SK-N-SH (cell line): ENCODE measurements at regions of chr15 and their contacts with region 1.

Region 1: DNA sequence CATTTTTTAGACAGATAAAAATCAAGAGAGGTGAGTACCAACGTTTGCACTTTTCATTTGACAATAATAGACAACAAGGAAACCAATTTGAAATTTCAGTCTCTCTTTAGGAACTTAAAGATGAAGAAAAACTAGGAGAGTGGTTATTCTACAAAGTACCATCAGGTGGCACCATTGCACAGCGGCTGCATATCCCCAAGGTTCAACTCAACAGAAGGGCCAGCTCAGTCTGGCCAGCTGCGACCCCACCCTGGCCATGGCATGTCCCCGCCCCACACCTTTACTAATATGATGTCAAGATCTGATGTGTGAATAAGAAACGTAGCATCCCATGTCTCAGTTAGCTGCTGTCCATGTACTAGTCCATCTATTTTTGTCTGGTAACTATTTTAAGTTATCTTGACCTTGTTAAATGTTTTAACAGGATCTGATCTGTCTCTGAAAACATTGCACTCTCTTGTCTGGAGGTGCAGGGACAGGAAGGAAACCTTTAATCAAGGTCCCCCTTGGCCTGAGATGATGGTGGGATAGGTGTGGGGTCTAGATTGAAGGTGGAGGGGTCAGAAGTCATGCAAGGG is 35.5 kb upstream of the CGNL1 start:
- DNase-seq: peak; percentile 72
- H3K4me3 ChIP-seq: no peak overlapping the region; a peak in 1 of 4 replicates
- H3K27ac ChIP-seq: no peak overlapping the region
- H3K4me1 ChIP-seq: peaks cover 2 to 4% of the 10 kb centered on the region in 2 experiments; a peak in 2 of 4 replicates
- H3K27me3 ChIP-seq: no peaks in the 10 kb centered on the region
- CTCF ChIP-seq: peak; percentile 92
- EP300 ChIP-seq: no peak
- RAD21 ChIP-seq: peak; percentile 98

Region 2: DNA sequence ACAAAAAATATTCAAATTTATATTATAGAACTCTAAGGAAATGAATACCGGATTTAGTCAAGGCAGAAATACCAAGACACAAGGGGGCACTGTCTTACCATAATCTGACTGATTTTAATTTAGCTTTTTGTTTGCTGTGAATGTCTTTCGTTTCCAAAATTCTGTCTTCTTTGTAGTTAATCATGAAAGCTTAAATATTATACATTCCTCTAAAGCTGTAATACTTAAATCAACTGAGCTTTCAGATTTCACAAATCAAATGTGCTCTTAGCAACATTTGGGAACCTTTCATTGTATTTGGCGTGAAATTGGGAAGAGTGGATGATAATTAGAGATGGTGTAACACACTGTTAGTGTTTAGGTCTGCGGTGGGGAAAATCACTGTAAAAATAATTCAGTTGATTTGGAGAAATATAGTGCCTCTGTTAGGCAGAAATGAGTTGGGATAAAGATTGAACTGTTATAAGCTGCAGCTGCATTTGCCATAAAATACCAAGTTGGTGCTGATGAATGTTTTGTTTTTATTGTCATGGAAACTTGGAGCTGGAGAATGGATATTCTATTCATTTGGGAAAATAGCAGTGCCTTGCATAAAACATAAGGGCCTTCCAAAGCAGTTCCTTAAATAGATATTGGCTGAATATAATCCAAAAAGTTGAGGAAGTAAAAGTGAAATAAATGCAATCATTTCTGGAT is 194.1 kb before region 1 on chr15:
- CTCF ChIA-PET with region 1: interaction called, 40 read pairs
- POLR2A ChIA-PET with region 1: no interaction called
- DNase-seq: peak; percentile 21
- H3K4me3 ChIP-seq: no peak overlapping the region
- H3K27ac ChIP-seq: peak overlapping the region in 1 of 2 experiments; percentile 41; a peak in 1 of 4 replicates
- H3K4me1 ChIP-seq: peaks cover 3 to 42% of the 10 kb centered on the region in 2 experiments; a peak in 3 of 4 replicates
- H3K27me3 ChIP-seq: no peaks in the 10 kb centered on the region
- CTCF ChIP-seq: peak; percentile 91
- EP300 ChIP-seq: no peak
- RAD21 ChIP-seq: peak; percentile 86

Region 3: DNA sequence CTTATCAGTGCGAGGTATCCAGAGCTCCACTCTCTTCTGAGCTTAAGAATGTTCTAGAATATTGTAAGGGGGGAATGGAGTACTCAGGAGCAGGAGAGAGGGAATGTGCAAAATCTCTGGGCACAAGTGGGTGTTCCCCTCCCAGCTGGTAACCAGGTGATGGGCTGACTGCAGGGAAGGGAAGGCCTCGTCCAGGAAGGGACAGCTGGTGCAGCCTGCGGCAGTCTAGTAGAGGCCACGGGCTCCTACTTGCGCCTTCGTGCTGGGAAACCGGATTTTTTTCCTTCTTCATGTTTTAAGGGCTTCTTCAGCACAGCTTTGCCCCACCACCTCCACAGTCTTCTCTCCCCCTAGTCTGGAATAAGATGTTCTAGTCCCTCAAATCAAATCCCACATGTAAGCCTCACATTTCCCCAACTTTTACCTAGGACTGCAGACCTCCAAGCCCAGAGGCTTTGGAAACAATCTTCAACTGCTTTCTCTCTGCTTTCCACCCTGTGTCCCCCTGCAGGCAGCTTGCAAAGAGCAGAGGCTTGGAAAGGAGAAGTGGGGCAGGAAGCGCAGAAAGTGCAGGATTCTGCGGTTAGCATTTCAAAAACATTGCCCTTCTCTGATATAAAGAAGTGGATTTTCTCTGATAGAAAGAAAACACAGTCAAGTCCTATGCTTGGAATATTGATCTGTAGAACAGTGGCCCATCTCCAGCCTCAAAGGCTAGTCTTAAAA is 23.7 kb after region 1 on chr15:
- CTCF ChIA-PET with region 1: interaction called, 10 read pairs
- POLR2A ChIA-PET with region 1: no interaction called
- DNase-seq: no peak
- H3K4me3 ChIP-seq: no peak overlapping the region
- H3K27ac ChIP-seq: no peak overlapping the region
- H3K4me1 ChIP-seq: no peaks in the 10 kb centered on the region
- H3K27me3 ChIP-seq: no peaks in the 10 kb centered on the region
- CTCF ChIP-seq: peak; percentile 25; the same call in 1 of the 2 replicates
- EP300 ChIP-seq: no peak
- RAD21 ChIP-seq: no peak

Region 4: DNA sequence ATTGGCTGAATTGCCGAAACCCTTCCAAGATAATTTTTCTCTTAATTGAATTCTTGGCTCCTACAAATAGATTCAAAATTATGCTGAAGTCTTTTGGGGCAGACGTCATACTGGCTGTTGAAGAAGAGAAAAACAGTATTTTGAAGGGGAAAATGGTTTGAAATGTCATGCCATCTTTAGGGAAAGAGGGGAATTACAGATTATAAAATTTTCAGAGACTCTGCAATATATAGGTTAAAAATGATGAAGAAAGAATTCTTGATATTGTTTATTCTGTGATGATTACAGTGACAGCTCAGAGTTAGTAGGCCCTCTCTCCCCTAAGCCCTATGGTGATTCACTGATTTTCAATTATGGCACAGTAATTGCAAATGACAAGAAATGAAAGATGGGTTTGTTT is 121.6 kb after region 1 on chr15:
- CTCF ChIA-PET with region 1: interaction called, 18 read pairs
- POLR2A ChIA-PET with region 1: no interaction called
- DNase-seq: no peak
- H3K4me3 ChIP-seq: no peak overlapping the region
- H3K27ac ChIP-seq: no peak overlapping the region
- H3K4me1 ChIP-seq: peaks cover 0 to 20% of the 10 kb centered on the region in 2 experiments; a peak in 3 of 4 replicates
- H3K27me3 ChIP-seq: no peaks in the 10 kb centered on the region
- CTCF ChIP-seq: peak; percentile 43
- EP300 ChIP-seq: no peak
- RAD21 ChIP-seq: peak; percentile 47; the same call in 1 of the 2 replicates

Region 5: DNA sequence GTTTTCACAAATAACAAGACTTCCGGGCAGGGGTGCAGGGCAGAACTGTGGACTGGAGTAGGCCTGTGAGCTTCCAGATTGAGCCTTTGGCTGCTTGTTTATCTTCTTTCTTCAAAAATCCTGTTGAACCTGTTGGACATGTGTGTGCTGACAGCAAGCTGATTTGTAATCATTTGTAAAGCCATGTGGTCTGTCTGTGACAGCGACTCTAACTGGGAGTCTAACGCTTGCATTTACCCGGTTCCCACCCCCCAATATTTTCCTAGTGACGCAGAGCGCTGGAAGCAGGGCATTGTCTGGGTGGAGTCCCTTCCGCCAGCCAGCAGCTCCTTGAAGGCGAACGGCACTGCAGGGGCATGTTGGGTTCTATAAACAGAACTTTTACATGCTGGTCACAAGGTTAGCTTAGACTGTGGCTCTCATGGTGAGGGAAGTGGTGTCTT is 165.2 kb after region 1 on chr15:
- CTCF ChIA-PET with region 1: interaction called, 24 read pairs
- POLR2A ChIA-PET with region 1: no interaction called
- DNase-seq: no peak
- H3K4me3 ChIP-seq: no peak overlapping the region
- H3K27ac ChIP-seq: no peak overlapping the region
- H3K4me1 ChIP-seq: peaks cover 0 to 17% of the 10 kb centered on the region in 2 experiments; a peak in 1 of 4 replicates
- H3K27me3 ChIP-seq: no peaks in the 10 kb centered on the region
- CTCF ChIP-seq: no peak
- EP300 ChIP-seq: no peak
- RAD21 ChIP-seq: no peak

Region 6: DNA sequence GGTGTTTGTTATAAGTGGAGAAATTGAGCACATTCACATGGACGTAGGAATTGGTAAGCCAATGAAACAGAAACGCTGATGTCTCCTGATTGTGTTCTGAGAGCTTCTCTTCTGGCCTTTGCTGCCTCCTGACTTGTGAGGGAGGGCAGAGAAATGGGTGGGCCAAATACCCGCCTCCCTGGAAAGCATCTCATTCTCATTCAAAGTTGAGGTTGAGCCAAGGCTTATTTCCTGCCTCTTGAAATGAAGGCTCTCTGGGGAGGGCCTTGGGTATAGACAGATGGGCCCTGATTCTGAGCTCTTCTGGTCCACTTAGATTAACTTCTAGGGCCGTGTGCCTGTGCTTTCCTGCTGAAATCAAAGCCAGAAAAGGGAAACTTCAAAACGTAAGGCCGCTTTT is 193.5 kb after region 1 on chr15:
- CTCF ChIA-PET with region 1: interaction called, 447 read pairs
- POLR2A ChIA-PET with region 1: no interaction called
- DNase-seq: no peak
- H3K4me3 ChIP-seq: no peak overlapping the region
- H3K27ac ChIP-seq: no peak overlapping the region
- H3K4me1 ChIP-seq: peaks cover 6 to 15% of the 10 kb centered on the region in 2 experiments; a peak in 2 of 4 replicates
- H3K27me3 ChIP-seq: no peaks in the 10 kb centered on the region
- CTCF ChIP-seq: no peak
- EP300 ChIP-seq: no peak
- RAD21 ChIP-seq: no peak

Region 7: DNA sequence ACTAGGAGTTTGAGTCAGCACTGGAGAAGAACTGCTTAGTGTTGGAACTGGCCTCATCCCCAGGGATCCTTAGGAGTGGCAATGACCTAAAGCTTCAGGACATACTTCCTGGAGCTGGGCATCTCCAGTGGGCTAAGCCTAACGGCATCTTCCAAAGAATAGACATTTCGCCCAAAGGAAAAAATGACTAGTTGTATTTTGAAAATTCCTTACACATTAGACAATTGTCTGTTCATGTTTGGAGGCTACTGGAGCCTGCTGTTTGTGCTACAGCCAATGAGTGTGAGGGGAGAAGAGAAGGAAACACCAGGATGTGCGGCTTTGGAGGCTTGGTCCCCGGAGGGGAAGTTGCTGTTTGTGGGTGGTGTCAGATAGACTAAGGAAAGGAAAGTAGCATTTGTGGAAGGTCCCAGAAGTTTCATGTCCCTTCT is 443.3 kb after region 1 on chr15:
- CTCF ChIA-PET with region 1: no interaction called
- POLR2A ChIA-PET with region 1: no interaction called
- DNase-seq: no peak
- H3K4me3 ChIP-seq: no peak overlapping the region
- H3K27ac ChIP-seq: no peak overlapping the region
- H3K4me1 ChIP-seq: peaks cover 0 to 5% of the 10 kb centered on the region in 2 experiments; a peak in 3 of 4 replicates
- H3K27me3 ChIP-seq: no peaks in the 10 kb centered on the region; the same call in 1 of the 2 replicates
- CTCF ChIP-seq: no peak
- EP300 ChIP-seq: no peak
- RAD21 ChIP-seq: no peak